Activated B cell treated with CpG ODN at 0.5 μM for 24 hours (primary cell): ENCODE measurements at regions of chr1 and their contacts with region 1.

Region 1: GRCh38 chr1:42958488-42959319 is at the start of gene SLC2A1:
- DNase-seq: peak; percentile 90
- ATAC-seq: peak; percentile 89
- H3K4me3 Mint-ChIP-seq: peak within 1 kb of the TSS; percentile 99
- H3K27ac Mint-ChIP-seq: peak within 1 kb of the TSS; percentile 99
- H3K4me1 Mint-ChIP-seq: peaks cover 77% of the 10 kb centered on the region
- H3K27me3 Mint-ChIP-seq: peaks cover 1% of the 10 kb centered on the region
- CTCF ChIP-seq: no peak
- total RNA-seq, gene SLC2A1: 105 and 117 TPM in 2 replicates

Region 2: GRCh38 chr1:42846257-42847110 is 112.2 kb before region 1 on chr1 and contains the start of gene ZNF691:
- CTCF ChIA-PET with region 1: no interaction called
- POLR2A ChIA-PET with region 1: interaction called, 3 read pairs
- intact Hi-C with region 1: loop called (anchors 1 kb)
- DNase-seq: peak; percentile 63
- ATAC-seq: peak; percentile 97
- H3K4me3 Mint-ChIP-seq: peak within 1 kb of the TSS; percentile 94
- H3K27ac Mint-ChIP-seq: peak within 1 kb of the TSS; percentile 83
- H3K4me1 Mint-ChIP-seq: peaks cover 43% of the 10 kb centered on the region
- H3K27me3 Mint-ChIP-seq: no peaks in the 10 kb centered on the region
- CTCF ChIP-seq: no peak
- total RNA-seq, gene ZNF691: 13.1 and 16.1 TPM in 2 replicates

Region 3: GRCh38 chr1:42931108-42931539 is 27.6 kb before region 1 on chr1:
- CTCF ChIA-PET with region 1: interaction called, 4 read pairs
- POLR2A ChIA-PET with region 1: interaction called, 694 read pairs
- intact Hi-C with region 1: loop called (anchors 1 kb)
- DNase-seq: peak; percentile 47
- ATAC-seq: peak; percentile 16
- H3K4me3 Mint-ChIP-seq: peak overlapping the region; percentile 69
- H3K27ac Mint-ChIP-seq: peak overlapping the region; percentile 91
- H3K4me1 Mint-ChIP-seq: peaks cover 75% of the 10 kb centered on the region
- H3K27me3 Mint-ChIP-seq: no peaks in the 10 kb centered on the region
- CTCF ChIP-seq: no peak

Region 4: GRCh38 chr1:42941640-42942330 is 16.9 kb before region 1 on chr1:
- CTCF ChIA-PET with region 1: interaction called, 9 read pairs
- POLR2A ChIA-PET with region 1: interaction called, 694 read pairs
- intact Hi-C with region 1: no loop called
- DNase-seq: no peak
- ATAC-seq: no peak
- H3K4me3 Mint-ChIP-seq: no peak overlapping the region
- H3K27ac Mint-ChIP-seq: peak overlapping the region; percentile 91
- H3K4me1 Mint-ChIP-seq: peaks cover 100% of the 10 kb centered on the region
- H3K27me3 Mint-ChIP-seq: no peaks in the 10 kb centered on the region
- CTCF ChIP-seq: no peak

Region 5: DNA sequence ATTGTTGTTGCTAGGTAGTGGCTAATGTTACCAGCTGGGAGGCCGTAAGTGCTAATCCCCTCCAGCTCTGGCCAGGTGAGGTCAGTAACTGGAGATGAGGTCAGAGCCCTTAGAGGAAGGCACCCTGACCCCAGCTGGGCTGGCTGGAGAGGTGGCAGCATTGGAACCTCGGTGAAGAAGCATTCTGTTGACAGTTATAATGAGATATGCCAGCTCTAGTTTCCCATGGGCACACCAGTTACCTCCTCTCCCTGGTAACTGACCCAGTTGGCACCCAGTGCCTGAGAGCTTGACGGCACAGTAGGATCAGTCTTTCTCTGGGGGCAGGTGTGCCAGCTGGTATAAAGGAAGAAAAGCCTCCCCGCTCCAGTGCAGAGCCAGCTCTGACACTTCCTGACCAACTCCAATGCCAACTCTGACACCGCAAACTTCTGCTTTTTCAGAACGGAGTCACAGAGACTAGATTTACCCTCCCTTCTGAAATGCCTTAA is 35.0 kb after region 1 on chr1:
- CTCF ChIA-PET with region 1: no interaction called
- POLR2A ChIA-PET with region 1: no interaction called
- intact Hi-C with region 1: loop called (anchors 5 kb)
- DNase-seq: no peak
- ATAC-seq: peak; percentile 93
- H3K4me3 Mint-ChIP-seq: no peak overlapping the region
- H3K27ac Mint-ChIP-seq: peak overlapping the region; percentile 5
- H3K4me1 Mint-ChIP-seq: peaks cover 11% of the 10 kb centered on the region
- H3K27me3 Mint-ChIP-seq: no peaks in the 10 kb centered on the region
- CTCF ChIP-seq: no peak

Region 6: GRCh38 chr1:43004587-43005451 is 46.1 kb after region 1 on chr1:
- CTCF ChIA-PET with region 1: no interaction called
- POLR2A ChIA-PET with region 1: no interaction called
- intact Hi-C with region 1: loop called (anchors 5 kb)
- DNase-seq: no peak
- ATAC-seq: peak; percentile 14
- H3K4me3 Mint-ChIP-seq: no peak overlapping the region
- H3K27ac Mint-ChIP-seq: no peak overlapping the region
- H3K4me1 Mint-ChIP-seq: peaks cover 7% of the 10 kb centered on the region
- H3K27me3 Mint-ChIP-seq: peaks cover 5% of the 10 kb centered on the region
- CTCF ChIP-seq: no peak